ENCODE measurements at regions of chr12 and their contacts with region 1.

Region 1: GRCh38 chr12:9925708-9926393 is 6.3 kb downstream of the CLEC2A start:
- DNase-seq: no peak
- ATAC-seq: peak; percentile 21 to 77 (median 56)
- H3K4me3 ChIP-seq: peak overlapping the region; percentile 33
- H3K27ac ChIP-seq: no peak overlapping the region
- H3K4me1 ChIP-seq: no peaks in the 10 kb centered on the region
- H3K27me3 ChIP-seq: no peaks in the 10 kb centered on the region
- CTCF ChIP-seq: peak; percentile 65

Region 2: DNA sequence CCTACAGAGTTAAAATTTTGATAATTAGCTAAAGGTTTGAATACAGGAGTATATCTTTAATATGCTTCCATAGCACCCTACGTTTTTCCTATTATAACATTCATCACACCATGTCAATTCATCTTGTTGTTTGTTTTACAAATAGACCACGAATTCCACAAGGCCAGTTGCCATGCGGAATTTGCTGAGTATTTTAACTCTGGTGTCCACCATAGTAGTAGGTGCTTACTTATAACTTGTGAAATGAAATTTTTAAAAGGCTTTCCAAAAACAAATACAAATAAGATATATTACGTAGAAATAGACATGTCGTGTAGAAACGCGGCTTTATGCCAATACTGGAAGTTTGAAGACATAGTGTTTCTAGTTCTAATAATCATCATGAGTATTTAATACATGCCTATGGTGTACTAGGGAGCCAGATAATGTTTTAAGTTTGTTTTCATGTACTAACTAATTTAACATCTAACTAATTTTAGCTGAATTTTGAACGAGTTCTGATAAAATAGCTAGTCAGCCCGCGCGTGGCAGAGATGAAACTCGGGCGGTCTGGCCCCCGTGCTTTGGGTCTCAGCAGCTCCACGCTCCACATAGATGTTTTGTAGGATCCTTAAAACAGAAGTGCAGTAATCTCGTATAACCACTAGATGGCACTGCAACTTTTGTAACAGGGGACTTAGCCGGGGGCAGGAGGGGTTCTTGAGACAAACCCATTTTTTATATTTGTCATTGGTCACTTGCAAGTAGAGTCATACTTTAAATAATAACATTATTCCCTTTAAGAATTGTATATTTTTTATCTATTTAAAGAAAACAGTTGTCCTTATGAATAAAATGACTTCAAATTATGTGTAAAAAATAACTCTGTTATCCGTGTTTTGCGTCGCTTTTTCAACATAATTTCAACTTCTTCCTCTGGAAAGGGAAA is 175.3 kb before region 1 on chr12:
- intact Hi-C with region 1: loop called (anchors 2 kb)
- DNase-seq: no peak
- ATAC-seq: peak; percentile 75 to 95 (median 78)
- H3K4me3 ChIP-seq: peak overlapping the region; percentile 47
- H3K27ac ChIP-seq: no peak overlapping the region
- H3K4me1 ChIP-seq: peaks cover 6% of the 10 kb centered on the region
- H3K27me3 ChIP-seq: no peaks in the 10 kb centered on the region
- CTCF ChIP-seq: peak; percentile 83

Region 3: DNA sequence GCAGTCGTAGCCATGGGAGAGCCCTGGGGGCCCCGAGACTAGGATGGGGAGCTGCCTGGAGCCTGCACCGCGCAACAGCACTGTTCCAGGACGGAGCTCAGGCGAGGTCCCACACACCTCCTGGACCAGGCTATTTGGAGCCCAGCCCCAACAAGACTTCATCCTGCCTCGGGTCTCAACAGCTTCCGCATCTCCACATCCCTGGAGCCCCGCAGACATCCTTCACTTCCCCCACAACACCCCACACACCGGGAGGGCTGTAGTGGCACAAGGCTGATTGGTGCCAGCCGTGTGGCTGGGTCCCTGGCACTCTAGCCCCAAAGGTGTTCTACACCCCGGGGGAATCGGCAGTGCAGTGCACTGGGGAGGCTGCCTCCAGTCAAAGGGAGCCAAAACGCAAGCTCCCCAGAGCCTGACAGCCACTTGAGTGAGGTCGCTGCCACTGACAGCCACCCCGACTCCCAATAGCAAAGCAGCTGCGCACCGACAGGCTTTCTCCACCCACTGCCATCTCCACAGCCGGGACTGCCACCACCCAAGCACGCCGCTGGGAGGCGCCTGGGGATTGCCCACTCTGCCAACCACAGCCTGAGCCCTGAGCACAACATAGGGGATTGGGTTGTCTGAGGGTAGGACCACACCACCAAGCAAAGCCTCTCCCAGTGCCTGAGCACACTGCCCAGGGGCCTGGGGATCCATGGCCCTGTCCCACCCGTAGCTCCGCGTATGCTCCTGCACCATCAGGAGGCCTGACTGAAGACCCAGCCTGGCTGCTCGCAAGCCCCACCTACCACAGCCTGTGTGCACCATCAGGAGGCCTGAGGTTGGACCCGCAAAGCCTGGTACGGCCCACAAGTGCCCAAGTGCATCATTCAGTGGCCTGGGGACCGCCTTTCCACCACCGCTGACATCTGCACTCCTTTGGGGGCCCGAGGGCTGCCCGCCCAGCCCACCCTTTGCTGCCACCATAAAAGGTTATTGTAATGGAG is 111.7 kb before region 1 on chr12:
- intact Hi-C with region 1: loop called (anchors 5 to 10 kb)
- DNase-seq: peak; percentile 74 to 84
- ATAC-seq: peak; percentile 64 to 85 (median 75)
- H3K4me3 ChIP-seq: peak overlapping the region; percentile 45
- H3K27ac ChIP-seq: no peak overlapping the region
- H3K4me1 ChIP-seq: no peaks in the 10 kb centered on the region
- H3K27me3 ChIP-seq: no peaks in the 10 kb centered on the region
- CTCF ChIP-seq: peak; percentile 54

Measured in psoas muscle (tissue), 8 donors.